Heart left ventricle (tissue), 16 donors: ENCODE measurements at regions of chr3 and their contacts with region 1.

Region 1: DNA sequence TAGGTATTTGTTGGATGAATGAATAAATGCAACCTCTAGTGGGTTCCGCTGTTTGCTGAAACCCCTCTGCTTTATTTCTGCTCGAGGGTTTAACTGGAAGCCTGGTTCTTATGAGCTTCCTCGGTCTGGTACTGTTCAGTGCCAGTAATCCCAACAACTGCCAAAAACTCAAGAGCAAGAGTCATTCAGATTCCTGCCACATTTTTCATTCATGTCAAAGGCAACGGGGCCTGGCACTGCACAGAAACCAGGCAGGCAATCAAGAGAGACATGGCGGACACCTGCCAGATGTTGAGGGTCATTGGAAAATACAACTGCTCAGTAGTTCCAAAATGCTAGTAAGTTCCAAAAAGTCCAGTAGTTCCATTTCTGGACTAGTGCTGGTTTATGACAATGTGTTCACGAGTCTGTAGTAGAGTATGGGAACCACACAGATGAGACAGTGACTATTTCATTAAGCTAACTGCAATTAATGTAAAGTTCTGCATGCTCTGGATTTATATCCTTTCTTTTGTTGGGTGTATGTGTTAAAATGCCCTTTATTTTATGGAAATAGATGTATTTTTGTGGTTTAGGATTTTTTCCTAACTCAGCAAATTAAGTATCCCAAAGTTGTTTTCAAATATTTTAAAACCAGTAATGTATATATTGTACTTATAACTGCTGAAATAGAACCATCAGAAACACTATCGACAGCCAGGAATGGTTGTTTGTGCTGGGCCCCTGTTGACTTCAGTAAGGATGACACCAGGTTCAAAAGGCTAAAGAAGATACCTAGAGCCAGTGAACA is 22.7 kb upstream of the TMEM41A start:
- DNase-seq: peak in 4 of 5 donors; percentile 33 to 59 (median 47)
- ATAC-seq: peak; percentile 64 to 92 (median 90)
- H3K4me3 ChIP-seq: no peak overlapping the region
- H3K27ac ChIP-seq: peak overlapping the region in 4 of 12 donors; percentile 0 to 50 (median 31)
- H3K4me1 ChIP-seq: no peaks in the 10 kb centered on the region
- H3K27me3 ChIP-seq: no peaks in the 10 kb centered on the region
- CTCF ChIP-seq: no peak
- POLR2A ChIP-seq: no peak

Region 2: GRCh38 chr3:185316738-185317407 is 204.7 kb before region 1 on chr3:
- intact Hi-C with region 1: no loop called
- DNase-seq: no peak
- ATAC-seq: peak in 3 of 4 donors; percentile 42 to 69 (median 61)
- H3K4me3 ChIP-seq: peak overlapping the region in 3 of 12 donors; percentile 2 to 7 (median 4)
- H3K27ac ChIP-seq: peak overlapping the region in 10 of 12 donors; percentile 10 to 79 (median 34)
- H3K4me1 ChIP-seq: peaks cover 0 to 27% (median 2%) of the 10 kb centered on the region in 12 donors
- H3K27me3 ChIP-seq: no peaks in the 10 kb centered on the region
- CTCF ChIP-seq: no peak
- POLR2A ChIP-seq: no peak

Region 3: DNA sequence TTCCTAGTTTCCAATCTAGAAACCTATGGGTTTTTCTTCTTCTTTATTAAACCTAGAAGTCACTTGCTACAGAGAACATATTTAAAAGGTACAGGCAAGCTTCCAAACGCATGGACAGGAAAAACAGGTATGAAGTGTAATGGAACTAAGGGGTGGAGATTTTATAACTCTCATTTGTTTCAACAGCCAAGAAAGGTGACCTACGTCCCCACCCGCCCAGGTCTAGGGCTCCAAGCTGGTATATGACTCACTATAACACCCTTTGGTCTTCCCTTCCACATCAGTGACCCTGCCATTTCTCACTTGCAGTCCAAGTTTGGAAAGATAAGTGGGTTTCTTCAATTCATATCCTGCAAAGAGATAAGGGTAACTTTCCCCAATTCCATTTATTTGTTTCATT is 36.9 kb after region 1 on chr3:
- intact Hi-C with region 1: loop called in 1 of 10 experiments (anchors 5 kb)
- DNase-seq: no peak
- ATAC-seq: no peak
- H3K4me3 ChIP-seq: no peak overlapping the region
- H3K27ac ChIP-seq: no peak overlapping the region
- H3K4me1 ChIP-seq: peaks cover 0 to 19% (median 0%) of the 10 kb centered on the region in 12 donors
- H3K27me3 ChIP-seq: peaks cover 0 to 22% (median 0%) of the 10 kb centered on the region in 9 donors
- CTCF ChIP-seq: no peak
- POLR2A ChIP-seq: no peak